HCT116 (cell line): ENCODE measurements at regions of chr6 and their contacts with region 1.

Region 1: GRCh38 chr6:33391278-33391921 is at the start of gene KIFC1:
- DNase-seq: peak; percentile 100
- ATAC-seq: peak; percentile 95
- H3K4me3 ChIP-seq: peak within 1 kb of the TSS; percentile 87 to 97
- H3K27ac ChIP-seq: peak within 1 kb of the TSS; percentile 87
- H3K4me1 ChIP-seq: peaks cover 11 to 28% of the 10 kb centered on the region in 2 experiments
- H3K27me3 ChIP-seq: no peaks in the 10 kb centered on the region
- CTCF ChIP-seq: peak; percentile 86 to 97 (median 94)
- POLR2A ChIP-seq: no peak
- RAD21 ChIP-seq: peak; percentile 80
- total RNA-seq, gene KIFC1: 84.7 TPM

Region 2: DNA sequence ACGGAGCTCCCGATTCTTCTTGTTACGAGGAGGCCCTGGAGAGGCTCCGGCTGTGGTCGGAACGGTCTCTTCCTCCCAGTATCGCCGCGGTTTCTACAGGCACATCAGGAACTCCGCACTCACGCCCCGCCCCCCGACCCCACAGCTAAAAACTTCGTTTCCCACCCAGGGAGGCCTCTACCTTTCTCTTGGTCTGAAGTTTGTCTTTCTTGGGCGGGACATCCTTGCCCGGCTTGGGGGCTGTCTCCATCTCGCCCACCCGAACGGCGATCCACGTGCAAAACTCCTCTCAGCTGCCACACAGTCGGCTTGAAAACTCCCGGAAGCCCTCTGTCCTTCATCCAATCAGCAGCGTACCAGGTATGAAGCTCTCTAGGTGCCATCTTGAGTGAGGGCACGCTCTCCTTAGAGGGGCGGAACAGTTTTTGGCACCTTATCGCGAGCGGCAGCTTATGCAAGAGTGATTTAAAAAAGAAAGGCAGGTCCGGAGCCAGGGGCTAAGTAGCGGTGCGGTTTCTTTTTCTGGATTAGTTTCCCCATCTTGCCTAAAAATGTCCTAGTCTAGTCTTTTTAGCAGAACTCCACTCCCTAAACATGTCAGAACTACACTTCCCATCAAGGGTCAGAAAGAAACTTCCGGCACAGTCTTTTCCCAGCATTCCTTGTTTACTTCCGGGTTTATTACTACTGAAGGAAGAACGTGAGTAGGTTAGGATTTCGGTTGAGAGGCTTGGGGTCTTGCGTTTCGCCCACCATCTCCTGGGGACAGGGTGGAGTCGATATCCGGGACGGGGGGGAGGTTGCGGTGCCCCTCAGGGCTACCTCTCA is 102.3 kb before region 1 on chr6 and contains the starts of genes PFDN6 and WDR46:
- CTCF ChIA-PET with region 1: no interaction called
- POLR2A ChIA-PET with region 1: no interaction called
- RAD21 ChIA-PET with region 1: no interaction called
- intact Hi-C with region 1: loop called (anchors 5 kb)
- DNase-seq: peak; percentile 83
- ATAC-seq: peak; percentile 94
- H3K4me3 ChIP-seq: peak within 1 kb of the TSS; percentile 97
- H3K27ac ChIP-seq: peak within 1 kb of the TSS; percentile 67
- H3K4me1 ChIP-seq: peaks cover 10 to 15% of the 10 kb centered on the region in 2 experiments
- H3K27me3 ChIP-seq: no peaks in the 10 kb centered on the region
- CTCF ChIP-seq: no peak
- POLR2A ChIP-seq: peak; percentile 59
- RAD21 ChIP-seq: no peak
- total RNA-seq, gene PFDN6: 90.5 TPM
- total RNA-seq, gene WDR46: 90.6 TPM

Region 3: DNA sequence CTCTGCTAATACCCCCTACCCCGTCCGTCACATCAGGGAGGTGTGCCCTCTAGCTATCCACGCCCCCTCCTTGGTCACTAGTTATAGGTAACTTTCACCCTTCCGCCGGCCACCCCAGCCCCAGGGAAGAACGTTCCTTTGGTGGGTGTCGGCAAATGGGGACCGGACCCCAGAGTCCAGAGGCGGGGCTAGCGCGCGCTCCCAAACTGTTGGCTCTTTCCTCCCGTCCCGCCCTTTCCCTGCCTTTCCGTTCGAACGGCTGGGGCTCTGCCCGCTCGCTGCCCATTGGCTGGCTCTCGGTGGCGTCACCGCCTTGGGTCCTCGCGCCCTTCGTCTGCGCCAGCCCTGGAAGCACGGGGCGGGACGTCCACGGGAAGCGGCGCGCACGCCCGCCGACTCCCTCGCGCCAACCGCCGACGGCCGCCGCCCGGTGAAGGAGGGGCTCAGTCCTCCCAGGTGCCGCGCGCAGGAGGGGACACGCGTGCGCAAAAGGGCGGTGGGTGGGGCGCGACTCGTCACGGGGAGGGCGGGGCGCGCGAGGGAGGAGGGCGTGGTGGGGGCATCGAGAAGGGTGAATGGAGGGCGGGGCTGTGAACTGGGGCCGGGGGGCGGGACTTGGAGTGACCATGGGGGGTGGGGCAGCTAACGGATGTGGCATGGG is 18.8 kb after region 1 on chr6:
- CTCF ChIA-PET with region 1: interaction called, 3 read pairs
- POLR2A ChIA-PET with region 1: interaction called, 3 read pairs
- RAD21 ChIA-PET with region 1: no interaction called
- intact Hi-C with region 1: loop called (anchors 1 kb)
- DNase-seq: peak; percentile 95
- ATAC-seq: peak; percentile 91
- H3K4me3 ChIP-seq: peak overlapping the region; percentile 67 to 77
- H3K27ac ChIP-seq: peak overlapping the region; percentile 78
- H3K4me1 ChIP-seq: peaks cover 5 to 18% of the 10 kb centered on the region in 2 experiments; a peak in 3 of 4 replicates
- H3K27me3 ChIP-seq: no peaks in the 10 kb centered on the region
- CTCF ChIP-seq: no peak
- POLR2A ChIP-seq: no peak
- RAD21 ChIP-seq: no peak